ENCODE measurements at regions of chr15 and their contacts with region 1.

Region 1: DNA sequence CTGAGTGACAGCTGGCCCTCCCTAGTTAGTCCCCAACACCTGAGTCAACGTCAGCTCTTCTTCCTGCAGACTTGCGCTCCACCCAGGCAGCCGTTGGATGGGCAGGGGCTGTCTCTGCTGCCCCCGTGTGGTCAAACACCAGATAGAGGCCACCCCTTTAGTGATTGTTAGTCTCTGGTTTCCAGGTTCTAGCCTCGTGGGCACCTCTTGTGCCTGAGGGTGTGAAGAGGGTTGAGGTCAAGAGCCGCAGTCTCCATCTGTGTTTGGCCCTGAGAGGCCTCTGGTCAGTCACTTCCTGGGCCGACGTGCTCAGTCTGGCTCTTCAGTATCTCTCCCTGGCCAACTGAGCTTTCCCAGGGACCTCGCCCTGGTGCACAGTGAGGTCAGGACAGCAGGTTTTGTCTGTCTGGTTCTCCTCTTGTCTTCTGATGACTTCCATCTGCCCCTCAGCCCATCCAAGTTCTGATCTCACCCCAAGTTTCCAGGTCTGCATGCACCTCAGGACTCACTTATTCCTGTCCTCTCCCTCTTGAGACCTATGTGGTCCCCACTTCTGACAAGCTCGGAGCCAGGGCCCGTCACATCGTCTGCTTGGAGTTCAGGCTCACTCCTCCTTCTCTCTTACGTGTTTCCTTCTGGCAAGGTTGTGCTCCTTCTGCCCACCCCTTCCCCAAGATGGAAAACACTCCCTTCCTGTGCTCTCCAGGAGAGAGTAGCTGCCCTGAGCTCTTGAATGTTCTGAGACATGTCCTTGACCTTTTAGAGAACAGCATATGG is 20.9 kb downstream of the CD276 start:
- DNase-seq: peak; percentile 86
- H3K4me3 ChIP-seq: no peak overlapping the region; a peak in 1 of 4 replicates
- H3K27ac ChIP-seq: no peak overlapping the region; a peak in 1 of 4 replicates
- H3K4me1 ChIP-seq: peaks cover 0 to 4% of the 10 kb centered on the region in 2 experiments; a peak in 1 of 4 replicates
- H3K27me3 ChIP-seq: no peaks in the 10 kb centered on the region
- CTCF ChIP-seq: peak; percentile 86
- EP300 ChIP-seq: no peak
- RAD21 ChIP-seq: peak; percentile 72

Region 2: GRCh38 chr15:73560501-73561117 is 144.4 kb before region 1 on chr15:
- CTCF ChIA-PET with region 1: interaction called, 96 read pairs
- POLR2A ChIA-PET with region 1: no interaction called
- DNase-seq: peak; percentile 42
- H3K4me3 ChIP-seq: no peak overlapping the region
- H3K27ac ChIP-seq: no peak overlapping the region
- H3K4me1 ChIP-seq: peaks cover 0 to 2% of the 10 kb centered on the region in 2 experiments; a peak in 2 of 4 replicates
- H3K27me3 ChIP-seq: no peaks in the 10 kb centered on the region
- CTCF ChIP-seq: peak; percentile 61
- EP300 ChIP-seq: no peak
- RAD21 ChIP-seq: peak; percentile 81

Region 3: DNA sequence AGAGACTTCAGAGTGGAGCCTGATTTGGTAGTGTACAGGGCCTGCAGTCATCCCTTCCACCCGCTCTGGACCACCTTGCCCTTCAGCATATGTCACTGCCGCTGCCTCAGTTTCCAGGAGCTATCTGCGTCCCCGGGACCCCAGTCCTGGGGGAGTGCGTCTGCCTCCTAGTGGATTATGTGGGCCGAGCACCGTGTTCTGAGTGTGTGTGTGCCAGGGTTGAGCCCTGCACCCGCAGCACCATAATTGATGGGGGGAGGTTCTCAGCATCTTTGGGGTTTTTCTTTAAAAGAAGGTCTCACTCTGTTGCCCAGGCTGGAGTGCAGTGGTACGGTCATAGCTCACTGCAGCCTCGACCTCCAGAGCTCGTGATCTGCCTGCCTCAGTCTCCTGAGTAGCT is 12.7 kb after region 1 on chr15:
- CTCF ChIA-PET with region 1: interaction called, 46 read pairs
- POLR2A ChIA-PET with region 1: no interaction called
- DNase-seq: no peak
- H3K4me3 ChIP-seq: no peak overlapping the region
- H3K27ac ChIP-seq: no peak overlapping the region
- H3K4me1 ChIP-seq: peaks cover 0 to 4% of the 10 kb centered on the region in 2 experiments; a peak in 1 of 4 replicates
- H3K27me3 ChIP-seq: no peaks in the 10 kb centered on the region
- CTCF ChIP-seq: peak; percentile 26
- EP300 ChIP-seq: no peak
- RAD21 ChIP-seq: no peak

Region 4: DNA sequence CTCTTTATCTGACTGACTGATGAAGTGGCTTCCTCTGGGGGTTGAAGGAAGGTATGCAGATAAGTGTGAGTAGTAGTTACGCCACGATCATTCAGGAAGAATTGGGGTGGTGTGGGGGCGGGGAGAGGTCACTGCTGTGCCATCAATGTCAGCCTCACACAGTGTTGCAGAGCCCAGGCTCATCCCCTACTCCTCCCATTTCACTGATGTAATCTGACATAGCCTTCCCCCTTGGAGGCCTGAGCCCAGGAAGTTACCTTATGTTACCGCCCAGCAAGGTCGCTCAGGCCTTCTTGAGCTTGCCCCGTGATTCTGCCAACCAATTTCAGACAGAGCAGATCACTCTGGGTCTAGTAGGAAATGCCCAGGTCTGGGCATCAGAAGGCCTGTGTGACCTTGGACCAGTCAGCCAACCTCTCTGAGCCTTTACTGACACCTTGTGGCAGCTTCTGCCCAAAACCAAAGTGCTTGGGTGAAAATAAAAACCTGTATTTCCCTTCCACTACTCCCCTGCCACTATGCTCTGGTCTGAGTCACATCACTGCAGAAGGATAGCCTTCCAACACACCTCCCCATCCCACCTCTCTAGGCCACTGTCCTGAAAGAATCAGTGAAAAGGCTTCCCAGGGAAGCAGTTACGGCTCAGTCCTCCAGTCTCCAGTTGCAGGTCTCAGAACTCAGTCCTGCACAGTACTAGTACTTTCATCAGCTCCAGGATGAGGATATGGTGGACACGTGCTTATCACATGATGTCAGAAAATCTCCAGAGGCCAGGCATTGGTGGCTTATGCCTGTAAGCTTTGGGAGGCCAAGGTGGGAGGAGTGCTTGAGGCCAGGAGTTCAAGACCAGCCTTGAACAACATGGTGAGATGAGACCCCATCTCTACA is 76.2 kb after region 1 on chr15:
- CTCF ChIA-PET with region 1: interaction called, 11 read pairs
- POLR2A ChIA-PET with region 1: no interaction called
- DNase-seq: no peak
- H3K4me3 ChIP-seq: no peak overlapping the region
- H3K27ac ChIP-seq: no peak overlapping the region
- H3K4me1 ChIP-seq: peaks cover 0 to 10% of the 10 kb centered on the region in 2 experiments; a peak in 1 of 4 replicates
- H3K27me3 ChIP-seq: no peaks in the 10 kb centered on the region
- CTCF ChIP-seq: peak; percentile 46
- EP300 ChIP-seq: no peak
- RAD21 ChIP-seq: peak; percentile 62

Region 5: GRCh38 chr15:73908030-73908821 is 203.2 kb after region 1 on chr15:
- CTCF ChIA-PET with region 1: interaction called, 47 read pairs
- POLR2A ChIA-PET with region 1: no interaction called
- DNase-seq: peak; percentile 86
- H3K4me3 ChIP-seq: no peak overlapping the region; a peak in 1 of 4 replicates
- H3K27ac ChIP-seq: no peak overlapping the region
- H3K4me1 ChIP-seq: peaks cover 0 to 2% of the 10 kb centered on the region in 2 experiments; a peak in 1 of 4 replicates
- H3K27me3 ChIP-seq: no peaks in the 10 kb centered on the region
- CTCF ChIP-seq: peak; percentile 90
- EP300 ChIP-seq: no peak
- RAD21 ChIP-seq: peak; percentile 91

Measured in SK-N-SH (cell line).